PC-3 (cell line): ENCODE measurements at regions of chr3 and their contacts with region 1.

Region 1: GRCh38 chr3:108552267-108553159 is 36.7 kb downstream of the CIP2A start:
- DNase-seq: peak; percentile 76
- ATAC-seq: no peak
- H3K4me3 ChIP-seq: no peak overlapping the region
- H3K27ac ChIP-seq: no peak overlapping the region
- H3K4me1 ChIP-seq: peaks cover 38% of the 10 kb centered on the region
- H3K27me3 ChIP-seq: no peaks in the 10 kb centered on the region
- CTCF ChIP-seq: peak; percentile 77

Region 2: DNA sequence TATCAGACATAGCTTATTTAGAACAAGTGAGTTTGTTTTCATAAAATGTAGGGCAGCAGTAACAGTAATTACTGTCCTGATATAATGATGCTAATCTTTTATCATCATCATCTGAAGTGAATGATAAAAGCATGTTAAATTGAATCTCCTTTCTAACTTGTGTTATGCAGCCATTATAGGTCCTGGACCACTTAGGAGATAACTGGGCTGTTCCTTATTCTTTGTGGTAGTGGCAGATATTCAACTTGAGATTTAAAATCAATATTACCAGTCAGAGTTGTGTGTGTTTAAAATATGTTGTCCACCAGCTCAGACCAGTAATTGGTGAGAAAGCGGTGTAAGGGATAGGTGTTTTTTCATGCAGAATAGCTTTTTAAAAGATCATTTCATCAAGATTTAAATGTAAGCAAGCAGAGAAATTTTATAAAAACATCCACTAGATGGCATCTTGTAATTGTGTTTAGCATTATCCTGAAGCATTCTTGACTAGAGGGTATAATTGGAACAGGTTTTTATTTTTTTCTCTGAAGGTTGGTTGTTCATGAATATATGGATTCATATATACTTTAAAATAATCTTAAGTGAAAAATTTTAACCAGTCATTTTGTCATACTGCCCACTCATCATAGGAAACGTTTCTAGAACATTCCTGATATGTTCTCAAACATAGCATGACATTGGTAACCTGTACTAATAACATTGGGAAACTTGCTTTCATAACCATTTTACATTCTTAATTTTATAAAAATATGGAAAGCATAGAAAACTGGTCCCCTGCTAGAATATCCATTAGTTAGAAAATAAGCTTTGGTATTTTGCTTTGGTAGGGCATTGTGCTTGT is 875.8 kb before region 1 on chr3:
- CTCF ChIA-PET with region 1: no interaction called
- POLR2A ChIA-PET with region 1: no interaction called
- intact Hi-C with region 1: loop called (anchors 10 kb)
- DNase-seq: peak; percentile 72
- ATAC-seq: peak; percentile 68
- H3K4me3 ChIP-seq: no peak overlapping the region
- H3K27ac ChIP-seq: no peak overlapping the region
- H3K4me1 ChIP-seq: no peaks in the 10 kb centered on the region
- H3K27me3 ChIP-seq: no peaks in the 10 kb centered on the region
- CTCF ChIP-seq: peak; percentile 76

Region 3: DNA sequence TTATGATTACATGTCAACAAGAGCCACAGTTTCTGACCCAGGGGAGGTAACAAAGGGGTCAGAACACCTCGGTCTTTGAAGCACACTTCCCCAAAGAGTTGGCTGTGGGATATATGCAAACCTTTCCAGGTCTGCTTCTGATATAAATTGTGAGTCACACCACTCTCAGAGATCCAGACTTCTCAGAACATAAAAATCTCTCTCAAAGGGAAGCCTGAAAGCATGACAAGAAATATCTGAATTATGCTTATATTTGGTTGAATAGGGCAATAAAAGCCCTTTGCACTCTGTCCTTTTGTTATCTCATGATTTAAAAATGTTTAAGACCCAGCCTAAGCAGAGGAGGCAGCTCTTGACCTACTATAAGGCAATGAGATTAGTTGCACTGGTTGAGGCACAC is 98.9 kb before region 1 on chr3:
- CTCF ChIA-PET with region 1: no interaction called
- POLR2A ChIA-PET with region 1: no interaction called
- intact Hi-C with region 1: no loop called
- DNase-seq: peak; percentile 15
- ATAC-seq: peak; percentile 65
- H3K4me3 ChIP-seq: no peak overlapping the region
- H3K27ac ChIP-seq: no peak overlapping the region
- H3K4me1 ChIP-seq: peaks cover 10% of the 10 kb centered on the region; the same call in 1 of the 2 replicates
- H3K27me3 ChIP-seq: no peaks in the 10 kb centered on the region
- CTCF ChIP-seq: no peak

Region 4: GRCh38 chr3:108489771-108490170 is 62.7 kb before region 1 on chr3:
- CTCF ChIA-PET with region 1: interaction called, 7 read pairs
- POLR2A ChIA-PET with region 1: no interaction called
- intact Hi-C with region 1: loop called (anchors 1 kb)
- DNase-seq: peak; percentile 71
- ATAC-seq: peak; percentile 35; the same call in 1 of the 2 replicates
- H3K4me3 ChIP-seq: no peak overlapping the region
- H3K27ac ChIP-seq: no peak overlapping the region
- H3K4me1 ChIP-seq: peaks cover 16% of the 10 kb centered on the region
- H3K27me3 ChIP-seq: no peaks in the 10 kb centered on the region
- CTCF ChIP-seq: peak; percentile 94

Region 5: DNA sequence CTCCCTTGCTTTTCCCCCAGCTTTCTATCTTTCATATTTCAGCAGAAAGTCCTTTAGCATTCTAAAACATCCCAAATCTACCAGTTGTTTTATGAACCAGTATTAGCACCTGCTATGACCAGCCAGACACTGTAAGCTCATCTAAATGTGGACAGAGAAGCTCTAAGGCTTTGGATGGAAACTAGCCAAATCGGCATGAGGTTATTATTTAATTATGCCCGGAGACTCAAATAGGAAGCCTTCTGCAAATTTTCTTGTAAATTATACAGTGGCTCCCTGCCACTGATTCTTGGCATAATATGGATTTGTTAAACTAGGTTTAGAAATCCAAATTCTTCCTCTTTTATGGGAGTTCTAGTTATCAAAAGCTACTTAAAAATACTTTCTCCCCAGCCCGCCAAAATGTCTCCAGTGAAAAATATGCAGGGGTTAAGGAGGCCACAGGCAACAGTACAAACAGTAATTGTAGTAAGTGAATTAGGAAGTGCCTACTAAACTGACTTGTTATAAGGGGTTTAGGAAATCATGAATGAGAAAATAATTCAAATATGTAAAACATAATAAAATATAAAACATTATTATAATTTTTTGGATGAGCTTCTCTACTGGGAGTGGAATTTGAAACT is 57.5 kb before region 1 on chr3:
- CTCF ChIA-PET with region 1: interaction called, 7 read pairs
- POLR2A ChIA-PET with region 1: no interaction called
- intact Hi-C with region 1: loop called (anchors 1 kb)
- DNase-seq: no peak
- ATAC-seq: peak; percentile 46
- H3K4me3 ChIP-seq: no peak overlapping the region
- H3K27ac ChIP-seq: no peak overlapping the region
- H3K4me1 ChIP-seq: no peaks in the 10 kb centered on the region
- H3K27me3 ChIP-seq: no peaks in the 10 kb centered on the region
- CTCF ChIP-seq: no peak

Region 6: DNA sequence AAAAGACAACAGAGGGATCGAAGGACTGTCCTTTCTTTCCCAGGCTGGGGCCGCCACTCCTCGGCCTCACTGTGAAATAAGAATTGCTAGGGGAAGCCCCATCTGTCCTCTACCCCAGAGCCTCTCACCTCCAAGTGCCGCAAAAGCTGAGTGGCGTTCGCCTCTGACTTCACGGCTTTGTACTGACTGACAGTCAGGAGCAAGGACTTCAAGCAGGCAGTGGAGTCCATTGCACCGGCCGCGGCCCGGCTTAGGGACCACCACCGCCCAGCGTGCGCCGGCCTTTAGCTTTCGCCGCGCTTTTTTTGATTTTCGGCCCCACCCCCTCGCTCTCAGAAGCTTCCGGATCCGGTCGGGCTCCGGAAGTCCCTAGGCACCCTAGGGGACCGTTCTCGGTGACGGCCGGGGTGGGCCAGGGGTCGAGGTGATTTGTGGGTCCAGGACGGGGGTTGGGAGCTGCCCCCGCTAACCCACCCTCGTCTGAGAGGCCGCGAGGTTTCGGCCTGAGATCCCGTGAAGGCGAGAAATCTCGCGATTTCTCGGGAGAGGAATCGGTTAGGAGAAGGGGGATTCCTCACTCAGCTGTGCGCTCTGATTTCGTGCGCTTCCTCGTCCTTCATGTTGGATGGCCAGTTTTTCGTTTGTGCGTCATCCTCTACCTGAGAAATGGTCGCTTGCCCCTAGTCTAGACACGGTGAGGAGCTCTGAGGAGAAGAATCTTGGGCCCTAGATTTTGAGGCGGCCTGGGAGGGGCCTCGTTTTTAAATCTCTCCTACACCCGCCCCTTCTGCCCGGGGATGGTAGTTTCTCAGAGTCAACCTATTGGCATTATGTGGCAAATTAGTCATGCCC is 36.9 kb after region 1 on chr3 and contains the starts of genes CIP2A and DZIP3:
- CTCF ChIA-PET with region 1: interaction called, 3 read pairs
- POLR2A ChIA-PET with region 1: no interaction called
- intact Hi-C with region 1: loop called (anchors 2 kb)
- DNase-seq: peak; percentile 96
- ATAC-seq: peak; percentile 85
- H3K4me3 ChIP-seq: peak within 1 kb of the TSS; percentile 98
- H3K27ac ChIP-seq: peak within 1 kb of the TSS; percentile 94
- H3K4me1 ChIP-seq: peaks cover 29% of the 10 kb centered on the region
- H3K27me3 ChIP-seq: no peaks in the 10 kb centered on the region
- CTCF ChIP-seq: no peak
- total RNA-seq, gene CIP2A: 47.9 and 52.4 TPM in 2 replicates
- total RNA-seq, gene DZIP3: 5.1 and 7.3 TPM in 2 replicates

Region 7: DNA sequence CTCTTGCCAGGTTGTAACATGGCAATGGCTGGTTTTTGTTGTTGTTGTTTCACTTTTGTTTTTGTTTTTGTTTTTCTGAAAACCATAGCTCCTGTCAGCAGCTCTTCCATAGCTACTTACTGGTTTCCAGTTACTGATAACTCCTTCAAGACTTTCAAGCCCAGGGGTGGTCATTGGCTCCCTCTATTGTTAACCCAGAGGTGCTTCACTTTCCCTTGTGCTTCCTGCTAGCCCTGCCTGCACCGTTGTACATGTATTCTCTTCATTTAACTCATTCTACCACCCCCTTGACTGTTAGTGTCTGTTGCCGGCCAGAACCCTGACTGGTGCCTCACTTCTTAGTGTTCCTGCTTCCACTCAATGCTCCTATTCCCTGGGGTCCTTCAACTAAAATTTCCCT is 265.9 kb after region 1 on chr3:
- CTCF ChIA-PET with region 1: no interaction called
- POLR2A ChIA-PET with region 1: no interaction called
- intact Hi-C with region 1: loop called (anchors 2 kb)
- DNase-seq: peak; percentile 61
- ATAC-seq: peak; percentile 94
- H3K4me3 ChIP-seq: no peak overlapping the region
- H3K27ac ChIP-seq: no peak overlapping the region
- H3K4me1 ChIP-seq: no peaks in the 10 kb centered on the region
- H3K27me3 ChIP-seq: peaks cover 40% of the 10 kb centered on the region
- CTCF ChIP-seq: peak; percentile 58

Region 8: DNA sequence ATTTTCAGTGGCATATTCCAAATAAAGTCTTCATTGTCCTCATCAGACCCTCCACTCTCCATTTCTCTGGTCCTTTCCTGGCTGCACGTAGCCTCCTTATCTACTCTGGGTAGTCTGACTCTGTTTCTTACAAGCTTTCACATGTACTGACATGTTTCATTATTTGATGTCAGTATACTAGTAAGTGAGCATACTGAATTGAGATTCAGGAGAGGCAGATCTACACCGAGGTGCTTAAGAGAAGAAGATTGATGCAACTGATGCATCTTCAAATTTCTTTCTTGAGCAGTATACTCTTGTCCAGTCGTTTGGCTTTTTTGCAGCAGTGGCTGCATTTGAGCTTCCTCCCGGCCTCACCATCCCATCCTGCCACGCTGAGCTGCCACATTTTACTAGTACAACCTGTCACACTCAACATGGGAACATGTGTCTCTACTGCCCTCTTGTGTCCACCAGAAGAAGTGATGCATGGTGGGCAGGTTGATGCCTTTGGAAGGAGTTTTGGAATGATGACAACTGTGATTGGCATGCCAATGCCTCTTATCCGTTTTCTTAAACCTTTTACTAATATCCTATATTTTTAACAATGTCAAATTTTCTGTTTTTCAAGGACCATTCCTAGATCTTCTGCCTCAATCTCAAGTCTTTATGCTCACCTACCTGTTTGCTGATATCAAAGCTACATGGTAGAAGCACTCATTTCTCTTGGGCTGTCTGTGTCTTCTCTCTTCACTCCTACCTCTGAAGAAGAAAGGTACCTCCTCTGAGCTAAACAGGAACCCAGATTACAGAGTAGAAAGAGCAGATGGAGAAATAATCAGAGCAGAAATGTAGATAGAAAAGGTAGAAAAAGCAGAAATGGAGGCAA is 362.5 kb after region 1 on chr3:
- CTCF ChIA-PET with region 1: interaction called, 3 read pairs
- POLR2A ChIA-PET with region 1: no interaction called
- intact Hi-C with region 1: loop called (anchors 1 kb)
- DNase-seq: peak; percentile 85
- ATAC-seq: peak; percentile 97
- H3K4me3 ChIP-seq: no peak overlapping the region
- H3K27ac ChIP-seq: no peak overlapping the region
- H3K4me1 ChIP-seq: no peaks in the 10 kb centered on the region
- H3K27me3 ChIP-seq: peaks cover 21% of the 10 kb centered on the region
- CTCF ChIP-seq: peak; percentile 92